ENCODE measurements at regions of chr21 and their contacts with region 1.

Region 1: GRCh38 chr21:33360881-33361602 is 36.3 kb downstream of the IFNAR1 start:
- DNase-seq: peak; percentile 90
- ATAC-seq: peak; percentile 82
- H3K4me3 Mint-ChIP-seq: peak overlapping the region; percentile 71
- H3K27ac Mint-ChIP-seq: peak overlapping the region; percentile 73
- H3K4me1 Mint-ChIP-seq: peaks cover 22% of the 10 kb centered on the region
- H3K27me3 Mint-ChIP-seq: no peaks in the 10 kb centered on the region

Region 2: GRCh38 chr21:33230545-33231398 is 130.3 kb before region 1 on chr21:
- CTCF ChIA-PET with region 1: interaction called, 11 read pairs
- DNase-seq: peak; percentile 70
- ATAC-seq: peak; percentile 43
- H3K4me3 Mint-ChIP-seq: peak overlapping the region; percentile 93
- H3K27ac Mint-ChIP-seq: peak overlapping the region; percentile 84
- H3K4me1 Mint-ChIP-seq: peaks cover 47% of the 10 kb centered on the region
- H3K27me3 Mint-ChIP-seq: peaks cover 3% of the 10 kb centered on the region

Region 3: DNA sequence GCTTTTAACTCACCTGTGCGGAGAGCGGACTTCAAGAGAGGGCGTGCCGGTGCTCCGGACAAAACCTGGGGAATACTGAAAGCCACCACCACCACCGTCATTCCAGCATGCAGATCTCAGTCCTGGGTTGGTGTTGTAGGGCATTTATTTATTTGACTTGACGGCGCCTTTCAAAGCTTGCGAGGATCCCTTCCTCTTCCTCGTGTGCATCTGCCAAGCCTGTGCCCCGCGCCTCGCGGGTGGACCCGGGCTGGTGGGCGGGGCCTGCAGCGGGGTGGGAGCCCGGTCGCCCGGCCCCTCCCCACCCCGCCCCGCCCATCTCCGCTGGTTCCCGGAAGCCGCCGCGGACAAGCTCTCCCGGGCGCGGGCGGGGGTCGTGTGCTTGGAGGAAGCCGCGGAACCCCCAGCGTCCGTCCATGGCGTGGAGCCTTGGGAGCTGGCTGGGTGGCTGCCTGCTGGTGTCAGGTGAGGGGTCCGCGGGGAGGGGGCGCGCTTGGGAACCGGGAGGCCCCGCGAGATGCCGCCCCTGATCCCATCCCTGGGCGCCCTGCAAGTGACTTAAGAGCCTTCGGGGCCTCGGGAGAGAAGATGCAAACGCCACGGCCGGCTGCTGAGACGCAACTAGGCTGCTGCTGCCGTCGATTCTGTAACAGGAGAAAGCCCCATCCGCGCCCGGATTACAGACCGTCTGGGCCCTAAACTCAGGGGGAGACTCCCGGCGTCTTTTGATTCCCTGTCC is 94.8 kb before region 1 on chr21 and contains the start of gene IL10RB:
- CTCF ChIA-PET with region 1: interaction called, 11 read pairs
- DNase-seq: peak; percentile 77
- ATAC-seq: peak; percentile 91
- H3K4me3 Mint-ChIP-seq: peak within 1 kb of the TSS; percentile 89
- H3K27ac Mint-ChIP-seq: peak within 1 kb of the TSS; percentile 93
- H3K4me1 Mint-ChIP-seq: peaks cover 48% of the 10 kb centered on the region
- H3K27me3 Mint-ChIP-seq: no peaks in the 10 kb centered on the region
- total RNA-seq, gene IL10RB: 30.9 to 34.9 TPM

Region 4: GRCh38 chr21:33339918-33340317 is 21.1 kb before region 1 on chr21:
- CTCF ChIA-PET with region 1: interaction called, 56 read pairs
- DNase-seq: no peak
- ATAC-seq: no peak
- H3K4me3 Mint-ChIP-seq: no peak overlapping the region
- H3K27ac Mint-ChIP-seq: no peak overlapping the region
- H3K4me1 Mint-ChIP-seq: peaks cover 3% of the 10 kb centered on the region
- H3K27me3 Mint-ChIP-seq: no peaks in the 10 kb centered on the region

Region 5: GRCh38 chr21:33386222-33386784 is 25.3 kb after region 1 on chr21:
- CTCF ChIA-PET with region 1: interaction called, 62 read pairs
- DNase-seq: no peak
- ATAC-seq: no peak
- H3K4me3 Mint-ChIP-seq: no peak overlapping the region
- H3K27ac Mint-ChIP-seq: no peak overlapping the region
- H3K4me1 Mint-ChIP-seq: peaks cover 38% of the 10 kb centered on the region
- H3K27me3 Mint-ChIP-seq: peaks cover 88% of the 10 kb centered on the region

Region 6: DNA sequence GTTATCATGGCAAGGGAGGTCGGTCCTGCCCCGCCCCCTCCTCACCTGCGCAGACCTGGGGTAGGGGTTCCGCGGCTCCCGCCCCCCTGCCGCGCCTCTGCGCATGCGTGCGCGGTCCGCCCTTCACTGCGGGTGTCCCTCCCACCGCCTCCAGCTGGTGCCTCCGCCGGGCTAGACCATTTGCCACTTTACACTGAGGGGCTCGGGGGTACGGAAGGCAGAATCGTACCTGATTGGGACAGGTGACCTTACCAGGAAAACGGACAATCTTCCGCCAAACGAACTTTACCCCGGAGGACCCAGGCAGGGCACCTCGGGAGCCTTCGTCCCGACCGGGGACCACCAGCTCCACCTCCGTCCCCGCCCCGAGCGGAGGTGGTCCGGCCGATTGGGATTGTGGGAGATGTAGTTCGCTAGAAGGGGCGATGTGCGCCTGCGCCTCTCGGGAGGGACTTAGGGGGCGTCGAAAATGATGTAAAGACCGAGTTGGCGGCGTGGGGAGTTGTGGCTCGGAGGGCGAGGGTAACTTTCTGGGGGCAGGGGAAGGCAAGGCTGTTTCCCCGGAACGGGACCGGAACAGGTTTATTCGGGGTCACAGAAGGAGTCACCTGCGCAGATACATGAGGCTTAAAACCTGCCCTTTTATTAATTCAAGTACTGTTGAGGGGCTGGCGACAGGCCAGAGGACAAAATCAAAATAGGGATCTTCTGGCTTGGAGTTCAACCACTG is 130.5 kb after region 1 on chr21 and contains the start of gene DNAJC28:
- CTCF ChIA-PET with region 1: no interaction called
- DNase-seq: peak; percentile 96
- ATAC-seq: peak; percentile 99
- H3K4me3 Mint-ChIP-seq: peak within 1 kb of the TSS; percentile 82
- H3K27ac Mint-ChIP-seq: peak within 1 kb of the TSS; percentile 78
- H3K4me1 Mint-ChIP-seq: peaks cover 10% of the 10 kb centered on the region
- H3K27me3 Mint-ChIP-seq: peaks cover 12% of the 10 kb centered on the region
- total RNA-seq, gene DNAJC28: 0.53 to 0.75 TPM

Region 7: DNA sequence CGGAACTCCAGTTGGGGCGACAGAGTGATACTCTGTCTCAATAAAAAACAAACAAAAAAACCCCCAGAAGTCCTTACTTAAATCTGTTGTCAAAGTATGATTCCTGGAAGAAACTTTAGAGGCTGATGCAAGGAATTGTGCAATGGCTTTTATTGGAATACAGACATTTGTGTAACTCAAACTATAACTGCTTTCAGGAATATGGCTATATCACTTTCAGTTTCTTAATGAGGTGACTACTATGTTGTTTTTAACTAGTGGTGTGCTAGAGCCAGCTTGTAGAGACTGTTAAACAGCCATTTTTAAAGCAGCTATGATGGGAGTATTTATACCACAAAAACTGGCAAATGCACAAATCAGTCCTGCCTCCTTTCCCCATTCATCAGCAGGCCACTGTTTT is 153.2 kb after region 1 on chr21:
- CTCF ChIA-PET with region 1: no interaction called
- DNase-seq: no peak
- ATAC-seq: no peak
- H3K4me3 Mint-ChIP-seq: no peak overlapping the region
- H3K27ac Mint-ChIP-seq: peak overlapping the region; percentile 75
- H3K4me1 Mint-ChIP-seq: peaks cover 15% of the 10 kb centered on the region
- H3K27me3 Mint-ChIP-seq: no peaks in the 10 kb centered on the region

Region 8: GRCh38 chr21:33542640-33543504 is 181.8 kb after region 1 on chr21 and contains the start of gene SON:
- CTCF ChIA-PET with region 1: no interaction called
- DNase-seq: peak; percentile 99
- ATAC-seq: peak; percentile 94
- H3K4me3 Mint-ChIP-seq: peak within 1 kb of the TSS; percentile 91
- H3K27ac Mint-ChIP-seq: peak within 1 kb of the TSS; percentile 100
- H3K4me1 Mint-ChIP-seq: peaks cover 34% of the 10 kb centered on the region
- H3K27me3 Mint-ChIP-seq: no peaks in the 10 kb centered on the region
- total RNA-seq, gene SON: 279 to 363 TPM

Measured in activated CD8-positive, alpha-beta memory T cell treated with anti-CD3 and anti-CD28 coated beads, Interleukin-2, amount 10 ng/mL, durations not matched to agents 7 days and 5 days (primary cell).